A673 (cell line): ENCODE measurements at regions of chr21 and their contacts with region 1.

Region 1: DNA sequence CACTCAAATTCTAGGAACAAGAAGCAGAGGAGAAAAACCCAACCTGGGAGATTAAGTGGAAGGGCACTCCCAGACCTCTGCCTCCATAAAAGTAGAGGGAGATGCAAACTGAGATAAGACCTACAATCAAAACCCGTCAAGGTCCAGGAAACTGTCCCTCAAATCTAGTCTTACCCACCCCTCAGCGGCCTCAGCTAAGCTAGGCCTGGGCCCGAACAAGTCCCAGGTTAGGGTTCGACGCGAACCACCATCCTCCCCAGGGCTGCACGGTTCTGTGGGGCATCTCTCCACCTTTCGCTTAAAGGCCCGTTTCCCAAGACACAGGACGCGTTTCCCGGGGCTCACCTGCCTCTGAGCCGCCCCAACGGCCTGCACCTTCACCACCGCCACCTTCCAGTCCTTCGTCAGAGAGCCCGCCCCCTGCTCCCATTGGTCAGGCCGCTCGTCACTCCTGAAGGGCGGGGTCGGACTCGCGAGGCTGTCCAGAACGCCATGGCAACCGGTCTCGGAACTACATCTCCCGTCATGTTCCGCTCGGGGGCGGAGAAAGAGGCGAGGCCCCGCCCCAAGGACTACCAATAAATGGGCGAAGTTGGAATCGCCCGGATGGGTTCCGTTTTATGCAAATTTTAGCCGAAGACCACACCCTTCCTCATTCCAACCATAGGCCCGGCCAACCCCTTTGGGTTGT is at the start of gene CRYZL1:
- DNase-seq: peak; percentile 100
- H3K4me3 ChIP-seq: peak within 1 kb of the TSS; percentile 82
- H3K27ac ChIP-seq: peak within 1 kb of the TSS; percentile 88
- H3K4me1 ChIP-seq: peaks cover 21% of the 10 kb centered on the region
- H3K27me3 ChIP-seq: no peaks in the 10 kb centered on the region
- CTCF ChIP-seq: no peak
- total RNA-seq, gene CRYZL1: 46.6 and 55.7 TPM in 2 replicates

Region 2: DNA sequence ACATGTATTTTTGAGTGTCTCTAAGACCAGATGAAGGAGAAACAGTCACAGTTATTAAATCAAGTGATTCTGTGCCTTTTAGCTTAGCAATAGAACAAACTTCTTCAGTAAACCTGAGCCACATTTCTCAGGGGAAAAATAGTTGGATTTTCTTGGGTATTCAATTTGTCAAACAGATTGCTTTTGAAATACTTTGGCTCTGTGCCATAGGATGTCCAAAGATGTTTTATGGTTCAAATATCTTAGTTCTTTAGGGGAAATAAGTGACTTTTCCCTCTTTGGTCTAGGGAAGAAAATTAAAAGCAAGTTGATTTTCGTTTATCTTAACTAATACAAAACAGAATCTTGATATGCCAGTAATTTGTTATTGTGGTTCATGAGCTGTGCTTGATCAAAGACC is 148.2 kb after region 1 on chr21:
- CTCF ChIA-PET with region 1: no interaction called
- POLR2A ChIA-PET with region 1: no interaction called
- intact Hi-C with region 1: loop called (anchors 10 kb)
- DNase-seq: peak; percentile 42
- H3K4me3 ChIP-seq: no peak overlapping the region
- H3K27ac ChIP-seq: no peak overlapping the region
- H3K4me1 ChIP-seq: peaks cover 18% of the 10 kb centered on the region
- H3K27me3 ChIP-seq: no peaks in the 10 kb centered on the region
- CTCF ChIP-seq: no peak

Region 3: GRCh38 chr21:33894736-33895288 is 253.3 kb after region 1 on chr21:
- CTCF ChIA-PET with region 1: no interaction called
- POLR2A ChIA-PET with region 1: no interaction called
- intact Hi-C with region 1: loop called (anchors 2 kb)
- DNase-seq: peak; percentile 94
- H3K4me3 ChIP-seq: peak overlapping the region; percentile 12
- H3K27ac ChIP-seq: no peak overlapping the region
- H3K4me1 ChIP-seq: peaks cover 15% of the 10 kb centered on the region
- H3K27me3 ChIP-seq: no peaks in the 10 kb centered on the region
- CTCF ChIP-seq: peak; percentile 81